ENCODE measurements at regions of chr19 and their contacts with region 1.

Region 1: GRCh38 chr19:55141696-55142095 is 7.3 kb downstream of the TNNT1 start:
- DNase-seq: no peak
- CTCF ChIP-seq: no peak

Region 2: GRCh38 chr19:55152010-55152409 is 10.3 kb after region 1 on chr19:
- CTCF ChIA-PET with region 1: interaction called, 11 read pairs
- POLR2A ChIA-PET with region 1: no interaction called
- DNase-seq: no peak
- CTCF ChIP-seq: no peak